ENCODE measurements at regions of chr2 and their contacts with region 1.

Region 1: DNA sequence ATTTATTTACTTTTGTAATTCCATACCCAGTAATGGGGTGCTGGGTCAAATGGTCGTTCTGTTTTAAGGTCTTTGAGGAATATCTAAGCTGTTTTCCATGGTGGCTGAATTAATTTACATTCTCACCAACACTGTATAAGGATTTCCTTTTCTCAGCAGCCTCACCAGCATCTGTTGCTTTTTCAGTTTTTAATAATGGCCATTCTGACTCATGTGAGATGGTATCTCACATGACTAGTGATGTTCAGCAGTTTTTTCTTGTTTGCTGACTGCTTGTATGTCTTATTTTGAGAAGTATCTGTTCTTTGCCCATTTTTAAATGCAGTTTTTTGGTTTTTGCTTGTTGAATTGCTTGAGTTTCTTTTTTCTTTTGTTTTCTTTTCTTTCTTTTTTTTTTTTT is 201.0 kb downstream of the RPRM start:
- DNase-seq: no peak
- H3K4me3 ChIP-seq: no peak overlapping the region
- H3K27ac ChIP-seq: no peak overlapping the region
- H3K4me1 ChIP-seq: no peaks in the 10 kb centered on the region
- H3K27me3 ChIP-seq: no peaks in the 10 kb centered on the region
- CTCF ChIP-seq: no peak

Region 2: GRCh38 chr2:153299809-153300208 is 22.3 kb after region 1 on chr2:
- intact Hi-C with region 1: loop called (anchors 2 kb)
- DNase-seq: no peak
- H3K4me3 ChIP-seq: no peak overlapping the region
- H3K27ac ChIP-seq: no peak overlapping the region
- H3K4me1 ChIP-seq: no peaks in the 10 kb centered on the region
- H3K27me3 ChIP-seq: no peaks in the 10 kb centered on the region
- CTCF ChIP-seq: no peak